CD4-positive, alpha-beta memory T cell (primary cell): ENCODE measurements at regions of chr3 and their contacts with region 1.

Region 1: DNA sequence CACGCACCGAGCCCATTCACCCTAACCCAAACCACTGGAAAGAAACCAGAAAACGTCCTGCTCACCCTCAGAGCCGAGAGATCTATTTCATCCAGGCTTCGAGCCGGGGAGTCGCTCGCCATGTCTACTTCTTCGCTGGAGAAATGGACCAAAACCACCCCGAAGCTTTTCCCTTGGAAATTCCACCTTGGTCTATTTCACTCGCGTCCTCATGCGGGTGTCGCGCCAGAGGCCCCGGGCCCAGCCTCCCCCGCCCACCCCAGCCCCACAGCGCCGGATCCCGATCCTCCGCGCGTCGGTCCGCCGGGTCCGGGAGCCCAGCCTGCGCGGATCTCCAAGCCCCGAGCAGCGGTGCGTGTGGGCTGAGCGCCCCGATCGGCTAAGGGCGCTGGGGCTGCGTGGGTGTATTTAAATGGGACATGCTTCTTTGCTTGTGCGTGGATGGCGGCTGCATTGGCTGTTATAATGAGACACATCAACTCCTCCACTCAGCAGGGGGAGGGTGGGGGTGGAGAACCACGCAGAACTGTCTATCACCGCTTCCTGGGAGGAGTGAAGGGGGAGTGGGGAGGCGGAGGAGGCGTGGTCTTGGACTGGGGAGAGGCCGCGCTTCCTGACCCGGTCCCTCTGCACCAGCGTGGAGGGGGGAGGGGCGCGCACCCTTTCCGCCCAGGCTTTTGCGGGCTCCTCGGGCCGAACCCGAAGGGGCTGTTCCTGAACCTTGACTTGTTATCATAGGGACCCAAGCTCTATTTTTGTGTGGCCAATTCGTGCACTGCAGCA is at the start of gene TNIK:
- DNase-seq: peak; percentile 91 to 99 (median 93)
- H3K4me3 ChIP-seq: peak within 1 kb of the TSS; percentile 92 to 93
- H3K4me3 Mint-ChIP-seq: peak within 1 kb of the TSS; percentile 91 to 99 (median 96)
- H3K27ac ChIP-seq: peak within 1 kb of the TSS; percentile 75
- H3K27ac Mint-ChIP-seq: peak within 1 kb of the TSS; percentile 88 to 98 (median 96)
- H3K4me1 ChIP-seq: peaks cover 42% of the 10 kb centered on the region
- H3K4me1 Mint-ChIP-seq: peaks cover 24 to 31% (median 29%) of the 10 kb centered on the region in 4 donors
- H3K27me3 ChIP-seq: no peaks in the 10 kb centered on the region
- H3K27me3 Mint-ChIP-seq: no peaks in the 10 kb centered on the region
- total RNA-seq, gene TNIK: 86.3 to 93.5 TPM

Region 2: DNA sequence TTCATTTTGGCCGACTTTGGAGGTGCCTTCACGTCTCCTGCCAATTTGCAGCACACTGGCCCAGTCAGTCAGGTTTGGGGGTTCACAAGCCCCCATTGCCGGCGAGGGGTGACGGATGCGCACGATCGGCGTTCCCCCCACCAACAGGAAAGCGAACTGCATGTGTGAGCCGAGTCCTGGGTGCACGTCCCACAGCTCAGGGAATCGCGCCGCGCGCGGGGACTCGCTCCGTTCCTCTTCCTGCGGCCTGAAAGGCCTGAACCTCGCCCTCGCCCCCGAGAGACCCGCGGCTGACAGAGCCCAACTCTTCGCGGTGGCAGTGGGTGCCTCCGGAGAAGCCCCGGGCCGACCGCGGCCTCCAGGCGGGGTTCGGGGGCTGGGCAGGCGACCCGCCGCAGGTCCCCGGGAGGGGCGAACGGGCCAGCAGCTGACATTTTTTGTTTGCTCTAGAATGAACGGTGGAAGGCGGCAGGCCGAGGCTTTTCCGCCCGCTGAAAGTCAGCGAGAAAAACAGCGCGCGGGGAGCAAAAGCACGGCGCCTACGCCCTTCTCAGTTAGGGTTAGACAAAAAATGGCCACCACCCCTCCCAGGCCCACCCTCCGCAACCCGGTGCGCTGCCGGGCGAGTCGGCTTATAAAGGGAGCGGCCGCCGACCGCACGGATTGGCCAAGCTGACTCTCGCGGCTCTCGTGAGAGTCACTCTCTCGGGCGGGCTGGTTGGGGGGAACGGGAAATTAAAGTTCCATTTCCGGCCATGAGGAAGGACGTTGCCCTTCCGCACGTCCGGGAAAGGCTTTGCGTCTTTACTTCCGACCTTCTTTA is 1695.5 kb before region 1 on chr3 and contains the start of gene TERC:
- CTCF ChIA-PET with region 1: no interaction called
- POLR2A ChIA-PET with region 1: no interaction called
- intact Hi-C with region 1: loop called (anchors 10 kb)
- DNase-seq: peak; percentile 93 to 96 (median 95)
- H3K4me3 ChIP-seq: peak within 1 kb of the TSS; percentile 36 to 70
- H3K4me3 Mint-ChIP-seq: peak within 1 kb of the TSS; percentile 94 to 98 (median 98)
- H3K27ac ChIP-seq: peak within 1 kb of the TSS; percentile 87
- H3K27ac Mint-ChIP-seq: peak within 1 kb of the TSS; percentile 95 to 99 (median 98)
- H3K4me1 ChIP-seq: peaks cover 23% of the 10 kb centered on the region
- H3K4me1 Mint-ChIP-seq: peaks cover 15 to 43% (median 23%) of the 10 kb centered on the region in 4 donors
- H3K27me3 ChIP-seq: no peaks in the 10 kb centered on the region
- H3K27me3 Mint-ChIP-seq: no peaks in the 10 kb centered on the region
- total RNA-seq, gene TERC: 15.6 to 15.7 TPM

Region 3: DNA sequence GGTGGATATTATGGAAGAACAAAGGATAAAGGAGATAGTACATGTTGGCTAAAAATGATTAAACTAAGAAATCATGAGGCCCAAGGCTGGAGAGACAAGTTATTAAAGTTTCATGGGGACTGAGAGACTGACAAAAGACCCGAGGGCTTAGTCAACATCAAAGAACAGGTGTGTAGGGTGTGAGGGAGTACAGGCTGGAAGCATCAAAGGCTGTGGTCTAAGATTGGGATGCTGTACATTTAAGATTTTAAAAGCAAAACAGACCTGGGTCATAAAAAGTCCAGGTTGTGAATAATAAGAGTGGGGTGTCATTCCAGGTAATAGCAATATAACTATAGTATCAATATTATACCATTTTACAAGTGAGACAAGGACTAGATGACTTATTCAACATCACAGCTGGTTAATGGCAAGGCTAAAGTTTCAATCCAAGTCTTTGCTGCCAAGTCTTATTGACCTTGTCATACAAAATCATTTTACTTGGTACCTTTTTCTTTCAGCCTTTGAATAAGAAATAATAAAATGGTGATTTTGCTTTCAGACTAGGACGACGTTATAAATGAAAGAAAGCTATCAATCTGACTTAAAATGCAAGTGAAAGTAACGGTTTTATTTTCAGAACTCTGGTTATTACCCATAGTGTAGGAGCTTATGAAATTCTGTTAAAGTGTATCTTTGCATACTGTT is 211.6 kb before region 1 on chr3:
- CTCF ChIA-PET with region 1: interaction called, 4 read pairs
- POLR2A ChIA-PET with region 1: interaction called, 3 read pairs
- intact Hi-C with region 1: loop called (anchors 5 kb)
- DNase-seq: peak in 1 of 5 donors; percentile 25
- H3K4me3 ChIP-seq: peak overlapping the region in 1 of 2 donors; percentile 37
- H3K4me3 Mint-ChIP-seq: no peak overlapping the region
- H3K27ac ChIP-seq: peak overlapping the region; percentile 25
- H3K27ac Mint-ChIP-seq: peak overlapping the region in 1 of 7 donors; percentile 65
- H3K4me1 ChIP-seq: peaks cover 81% of the 10 kb centered on the region
- H3K4me1 Mint-ChIP-seq: peaks cover 30 to 45% (median 38%) of the 10 kb centered on the region in 4 donors
- H3K27me3 ChIP-seq: no peaks in the 10 kb centered on the region
- H3K27me3 Mint-ChIP-seq: no peaks in the 10 kb centered on the region

Region 4: DNA sequence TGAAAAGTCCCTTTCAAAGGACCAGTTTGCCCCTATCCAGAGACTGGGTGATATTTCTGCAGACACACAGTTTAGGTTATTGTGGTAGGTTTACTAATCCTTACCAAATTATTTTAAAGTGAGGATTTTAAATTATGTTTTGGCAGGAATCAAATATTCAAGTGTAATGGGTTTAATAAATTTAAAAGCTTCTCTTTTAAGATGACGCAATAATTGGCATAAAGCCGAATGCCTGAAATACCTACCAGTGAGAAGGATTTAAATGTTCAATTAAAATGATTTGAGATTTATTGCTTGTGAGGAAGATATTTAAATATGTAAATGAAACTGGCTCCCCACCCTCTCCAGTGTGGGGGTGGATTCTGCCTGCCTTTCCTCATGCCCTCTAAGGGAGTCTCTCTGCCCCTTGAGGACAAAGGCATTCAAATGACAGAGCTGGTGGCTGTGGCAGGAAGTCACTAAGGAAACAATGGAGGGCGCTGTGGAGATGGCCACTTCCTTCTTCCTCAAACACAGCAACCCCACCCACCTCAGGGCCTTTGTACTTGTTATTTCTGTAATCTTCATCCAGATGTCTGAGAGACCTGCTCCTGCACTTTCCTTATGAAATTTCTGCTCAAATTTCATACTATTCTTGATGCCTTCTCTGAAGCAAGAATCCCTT is 131.6 kb before region 1 on chr3:
- CTCF ChIA-PET with region 1: interaction called, 5 read pairs
- POLR2A ChIA-PET with region 1: interaction called, 4 read pairs
- intact Hi-C with region 1: loop called (anchors 2 kb)
- DNase-seq: peak; percentile 52 to 68 (median 63)
- H3K4me3 ChIP-seq: no peak overlapping the region
- H3K4me3 Mint-ChIP-seq: peak overlapping the region in 7 of 8 donors; percentile 1 to 74 (median 60)
- H3K27ac ChIP-seq: no peak overlapping the region
- H3K27ac Mint-ChIP-seq: peak overlapping the region in 5 of 7 donors; percentile 51 to 84 (median 72)
- H3K4me1 ChIP-seq: peaks cover 40% of the 10 kb centered on the region
- H3K4me1 Mint-ChIP-seq: peaks cover 35 to 76% (median 60%) of the 10 kb centered on the region in 4 donors
- H3K27me3 ChIP-seq: no peaks in the 10 kb centered on the region
- H3K27me3 Mint-ChIP-seq: no peaks in the 10 kb centered on the region

Region 5: GRCh38 chr3:171480526-171480925 is 20.4 kb after region 1 on chr3:
- CTCF ChIA-PET with region 1: interaction called, 7 read pairs
- POLR2A ChIA-PET with region 1: interaction called, 36 read pairs
- intact Hi-C with region 1: loop called (anchors 1 kb)
- DNase-seq: peak in 4 of 5 donors; percentile 35 to 53 (median 38)
- H3K4me3 ChIP-seq: no peak overlapping the region
- H3K4me3 Mint-ChIP-seq: peak overlapping the region; percentile 8 to 80 (median 52)
- H3K27ac ChIP-seq: peak overlapping the region; percentile 13
- H3K27ac Mint-ChIP-seq: peak overlapping the region; percentile 28 to 93 (median 88)
- H3K4me1 ChIP-seq: peaks cover 20% of the 10 kb centered on the region
- H3K4me1 Mint-ChIP-seq: peaks cover 8 to 15% (median 11%) of the 10 kb centered on the region in 4 donors
- H3K27me3 ChIP-seq: no peaks in the 10 kb centered on the region
- H3K27me3 Mint-ChIP-seq: no peaks in the 10 kb centered on the region

Region 6: GRCh38 chr3:171514466-171514865 is 54.3 kb after region 1 on chr3:
- CTCF ChIA-PET with region 1: no interaction called
- POLR2A ChIA-PET with region 1: no interaction called
- intact Hi-C with region 1: loop called (anchors 5 kb)
- DNase-seq: no peak
- H3K4me3 ChIP-seq: no peak overlapping the region
- H3K4me3 Mint-ChIP-seq: no peak overlapping the region
- H3K27ac ChIP-seq: no peak overlapping the region
- H3K27ac Mint-ChIP-seq: no peak overlapping the region
- H3K4me1 ChIP-seq: no peaks in the 10 kb centered on the region
- H3K4me1 Mint-ChIP-seq: no peaks in the 10 kb centered on the region
- H3K27me3 ChIP-seq: no peaks in the 10 kb centered on the region
- H3K27me3 Mint-ChIP-seq: peaks cover 0 to 5% of the 10 kb centered on the region in 2 donors

Region 7: GRCh38 chr3:172039436-172040077 is 579.4 kb after region 1 on chr3 and contains the start of gene FNDC3B:
- CTCF ChIA-PET with region 1: no interaction called
- POLR2A ChIA-PET with region 1: no interaction called
- intact Hi-C with region 1: no loop called
- DNase-seq: peak; percentile 90 to 93 (median 91)
- H3K4me3 ChIP-seq: peak within 1 kb of the TSS; percentile 61 to 62
- H3K4me3 Mint-ChIP-seq: peak within 1 kb of the TSS; percentile 94 to 99 (median 97)
- H3K27ac ChIP-seq: peak within 1 kb of the TSS; percentile 92
- H3K27ac Mint-ChIP-seq: peak within 1 kb of the TSS; percentile 94 to 99 (median 96)
- H3K4me1 ChIP-seq: peaks cover 29% of the 10 kb centered on the region
- H3K4me1 Mint-ChIP-seq: peaks cover 25 to 58% (median 37%) of the 10 kb centered on the region in 4 donors
- H3K27me3 ChIP-seq: no peaks in the 10 kb centered on the region
- H3K27me3 Mint-ChIP-seq: no peaks in the 10 kb centered on the region
- total RNA-seq, gene FNDC3B: 18.0 to 18.2 TPM

Region 8: DNA sequence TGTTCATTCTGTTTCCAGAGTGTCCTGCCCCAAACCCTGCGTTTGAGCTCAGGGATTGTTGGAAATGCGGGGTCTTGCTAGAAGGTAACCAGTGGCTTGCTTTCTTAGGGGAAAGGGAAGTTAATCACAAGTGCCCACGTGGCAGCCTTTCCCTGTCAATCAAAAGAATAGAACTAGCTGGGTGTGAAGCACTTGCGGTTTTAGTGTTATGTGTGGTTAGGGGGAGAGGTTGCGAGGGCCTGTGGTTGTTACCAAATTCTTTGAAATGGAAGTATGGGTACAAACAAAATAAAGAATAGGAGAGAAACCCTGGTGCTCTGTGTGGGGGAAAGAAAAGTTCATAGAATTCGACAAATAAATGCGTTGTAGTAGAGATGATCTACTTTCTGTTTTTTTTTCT is 646.9 kb after region 1 on chr3:
- CTCF ChIA-PET with region 1: no interaction called
- POLR2A ChIA-PET with region 1: no interaction called
- intact Hi-C with region 1: loop called (anchors 10 kb)
- DNase-seq: peak; percentile 83 to 84 (median 84)
- H3K4me3 ChIP-seq: peak overlapping the region; percentile 1 to 56
- H3K4me3 Mint-ChIP-seq: peak overlapping the region; percentile 76 to 91 (median 81)
- H3K27ac ChIP-seq: peak overlapping the region; percentile 42
- H3K27ac Mint-ChIP-seq: peak overlapping the region; percentile 88 to 97 (median 94)
- H3K4me1 ChIP-seq: peaks cover 82% of the 10 kb centered on the region
- H3K4me1 Mint-ChIP-seq: peaks cover 67 to 85% (median 78%) of the 10 kb centered on the region in 4 donors
- H3K27me3 ChIP-seq: no peaks in the 10 kb centered on the region
- H3K27me3 Mint-ChIP-seq: no peaks in the 10 kb centered on the region